Activated CD4-positive, alpha-beta memory T cell treated with anti-CD3 and anti-CD28 coated beads for 36 hours (primary cell): ENCODE measurements at regions of chrX and their contacts with region 1.

Region 1: DNA sequence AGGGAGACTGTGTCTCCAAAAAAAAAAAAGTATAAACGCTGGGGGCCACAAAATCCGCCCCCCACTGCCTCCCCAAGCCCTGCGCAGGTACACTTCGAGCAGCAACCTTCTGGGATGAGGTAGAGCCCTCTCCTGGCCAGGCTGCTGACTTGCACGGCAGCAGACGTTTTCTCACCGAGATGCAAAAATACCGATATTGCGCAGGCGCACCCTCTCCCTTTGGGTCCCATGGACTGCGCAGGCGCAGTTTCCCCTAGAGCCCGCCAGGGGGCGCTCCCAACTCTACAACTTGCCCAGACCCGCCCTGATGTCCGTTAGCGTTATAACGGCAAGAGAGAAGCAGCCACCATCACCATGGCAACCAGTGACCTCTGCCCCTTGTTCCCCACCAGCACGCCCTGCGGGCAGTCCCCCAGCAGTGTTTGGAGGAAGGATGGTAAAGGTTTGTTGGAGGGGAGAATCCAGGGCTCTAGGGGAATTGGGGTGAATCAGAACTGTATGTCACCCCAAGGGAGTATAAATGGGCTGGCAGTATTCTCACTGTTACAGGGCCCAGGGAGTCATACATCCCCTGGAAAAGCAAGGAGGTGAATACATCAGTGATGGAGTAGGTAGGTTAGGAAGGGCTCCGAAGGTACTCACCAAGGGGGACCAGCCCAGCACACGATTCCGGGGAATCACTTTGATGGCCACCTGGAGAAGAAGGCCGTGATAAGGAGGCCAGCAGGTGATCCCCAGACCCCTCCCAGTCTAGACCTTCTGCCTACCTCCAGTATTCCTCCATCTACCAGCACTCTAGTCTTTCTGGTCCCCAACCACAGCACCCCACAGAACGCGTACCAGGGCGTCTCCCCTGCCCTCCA is 1.5 kb downstream of the PIM2 start:
- DNase-seq: peak; percentile 93
- H3K4me3 Mint-ChIP-seq: peak overlapping the region; percentile 98
- H3K27ac Mint-ChIP-seq: peak overlapping the region; percentile 99
- H3K4me1 Mint-ChIP-seq: peaks cover 36% of the 10 kb centered on the region
- H3K27me3 Mint-ChIP-seq: peaks cover 4% of the 10 kb centered on the region

Region 2: GRCh38 chrX:48648336-48648751 is 269.0 kb before region 1 on chrX:
- CTCF ChIA-PET with region 1: interaction called, 8 read pairs
- POLR2A ChIA-PET with region 1: no interaction called
- intact Hi-C with region 1: loop called (anchors 10 kb)
- DNase-seq: peak; percentile 43
- H3K4me3 Mint-ChIP-seq: no peak overlapping the region
- H3K27ac Mint-ChIP-seq: no peak overlapping the region
- H3K4me1 Mint-ChIP-seq: peaks cover 5% of the 10 kb centered on the region
- H3K27me3 Mint-ChIP-seq: no peaks in the 10 kb centered on the region

Region 3: GRCh38 chrX:48696301-48697181 is 220.8 kb before region 1 on chrX and contains the start of gene SUV39H1:
- CTCF ChIA-PET with region 1: no interaction called
- POLR2A ChIA-PET with region 1: no interaction called
- intact Hi-C with region 1: no loop called
- DNase-seq: peak; percentile 91
- H3K4me3 Mint-ChIP-seq: peak within 1 kb of the TSS; percentile 87
- H3K27ac Mint-ChIP-seq: peak within 1 kb of the TSS; percentile 92
- H3K4me1 Mint-ChIP-seq: peaks cover 26% of the 10 kb centered on the region
- H3K27me3 Mint-ChIP-seq: no peaks in the 10 kb centered on the region
- total RNA-seq, gene SUV39H1: 32.3 to 35.6 TPM

Region 4: GRCh38 chrX:48897621-48898306 is 19.6 kb before region 1 on chrX and contains the starts of genes PQBP1 and TIMM17B:
- CTCF ChIA-PET with region 1: interaction called, 3 read pairs
- POLR2A ChIA-PET with region 1: interaction called, 32 read pairs
- intact Hi-C with region 1: loop called (anchors 1 kb)
- DNase-seq: peak; percentile 91
- H3K4me3 Mint-ChIP-seq: peak within 1 kb of the TSS; percentile 79
- H3K27ac Mint-ChIP-seq: peak within 1 kb of the TSS; percentile 88
- H3K4me1 Mint-ChIP-seq: peaks cover 16% of the 10 kb centered on the region
- H3K27me3 Mint-ChIP-seq: no peaks in the 10 kb centered on the region
- total RNA-seq, gene PQBP1: 85.0 to 85.5 TPM
- total RNA-seq, gene TIMM17B: 83.8 to 86.6 TPM

Region 5: GRCh38 chrX:48937054-48937907 is 19.9 kb after region 1 on chrX:
- CTCF ChIA-PET with region 1: interaction called, 13 read pairs
- POLR2A ChIA-PET with region 1: interaction called, 286 read pairs
- intact Hi-C with region 1: loop called (anchors 1 kb)
- DNase-seq: peak; percentile 95
- H3K4me3 Mint-ChIP-seq: peak overlapping the region; percentile 75
- H3K27ac Mint-ChIP-seq: peak overlapping the region; percentile 97
- H3K4me1 Mint-ChIP-seq: peaks cover 79% of the 10 kb centered on the region
- H3K27me3 Mint-ChIP-seq: no peaks in the 10 kb centered on the region

Region 6: DNA sequence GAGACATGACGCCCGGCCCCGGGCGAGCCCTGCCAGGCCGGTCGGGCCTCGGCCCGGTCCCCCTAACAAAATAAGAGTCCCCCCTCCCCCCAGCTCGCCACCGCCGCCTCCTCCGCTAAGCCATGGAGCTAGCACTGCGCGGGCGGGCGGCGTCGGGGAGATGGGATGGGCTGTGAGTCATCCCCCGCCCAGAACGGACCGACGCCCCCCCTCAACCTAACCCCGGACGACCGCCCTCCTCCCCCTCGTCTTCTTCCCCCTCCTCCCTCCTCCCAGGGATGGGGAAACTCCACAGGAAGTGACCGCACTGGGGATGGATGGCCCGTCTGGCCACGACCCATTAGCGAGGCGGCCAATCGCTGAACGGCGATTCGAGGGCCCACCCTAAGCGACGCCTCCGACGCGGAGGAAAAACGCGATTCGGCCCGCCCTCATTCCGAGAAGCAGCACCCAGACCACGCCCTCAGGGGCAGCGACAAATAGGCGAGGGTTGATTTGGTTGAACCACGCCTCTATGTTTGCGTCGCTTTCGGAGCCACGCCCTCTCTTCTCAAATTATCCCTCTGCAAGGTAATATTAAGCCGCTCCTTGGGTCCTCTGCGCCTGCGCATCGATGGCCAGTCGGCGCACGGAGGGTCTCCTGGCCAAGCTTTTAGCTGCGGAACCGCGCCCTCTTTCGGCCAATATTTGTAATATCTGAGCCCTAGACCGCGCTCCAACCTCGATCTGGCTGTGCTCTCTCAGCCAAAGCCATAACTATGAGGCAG is 126.0 kb after region 1 on chrX and contains the start of gene TFE3:
- CTCF ChIA-PET with region 1: no interaction called
- POLR2A ChIA-PET with region 1: no interaction called
- intact Hi-C with region 1: loop called (anchors 2 kb)
- DNase-seq: peak; percentile 97
- H3K4me3 Mint-ChIP-seq: peak within 1 kb of the TSS; percentile 91
- H3K27ac Mint-ChIP-seq: peak within 1 kb of the TSS; percentile 92
- H3K4me1 Mint-ChIP-seq: peaks cover 30% of the 10 kb centered on the region
- H3K27me3 Mint-ChIP-seq: no peaks in the 10 kb centered on the region
- total RNA-seq, gene TFE3: 29.0 to 29.1 TPM